ENCODE measurements at regions of chr12 and their contacts with region 1.

Region 1: DNA sequence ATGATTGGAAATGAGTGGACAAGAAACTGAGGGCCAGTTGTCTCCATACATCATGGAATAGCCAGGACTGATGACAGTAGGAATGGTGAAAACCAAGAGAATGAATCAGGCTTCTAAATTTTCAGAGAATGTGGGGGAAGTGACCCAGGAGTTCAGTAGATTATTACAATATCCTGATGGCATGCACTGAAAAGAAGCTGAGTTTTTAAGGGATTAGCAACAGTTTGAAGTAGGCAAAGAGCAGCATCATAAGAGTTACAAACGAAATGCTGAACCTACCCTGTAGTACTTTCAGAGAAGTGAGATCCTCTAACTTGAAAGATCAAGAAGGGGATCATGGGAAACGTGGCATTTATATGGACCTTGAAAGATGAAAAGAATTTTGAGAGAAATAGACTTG is 13.2 kb downstream of the SLC2A14 start:
- DNase-seq: peak in 1 of 2 experiments; percentile 7
- H3K4me3 ChIP-seq: no peak overlapping the region
- H3K4me3 Mint-ChIP-seq: no peak overlapping the region
- H3K27ac Mint-ChIP-seq: peak overlapping the region; percentile 92
- H3K4me1 ChIP-seq: peaks cover 56% of the 10 kb centered on the region
- H3K4me1 Mint-ChIP-seq: peaks cover 52% of the 10 kb centered on the region
- H3K27me3 ChIP-seq: no peaks in the 10 kb centered on the region
- H3K27me3 Mint-ChIP-seq: no peaks in the 10 kb centered on the region
- CTCF ChIP-seq: no peak

Region 2: GRCh38 chr12:7832059-7832696 is 27.4 kb before region 1 on chr12:
- CTCF ChIA-PET with region 1: interaction called, 10 read pairs
- POLR2A ChIA-PET with region 1: interaction called, 14 read pairs
- intact Hi-C with region 1: loop called (anchors 1 kb)
- DNase-seq: peak; percentile 80 to 85
- H3K4me3 ChIP-seq: no peak overlapping the region
- H3K4me3 Mint-ChIP-seq: peak overlapping the region; percentile 1
- H3K27ac Mint-ChIP-seq: peak overlapping the region; percentile 60
- H3K4me1 ChIP-seq: peaks cover 61% of the 10 kb centered on the region
- H3K4me1 Mint-ChIP-seq: peaks cover 51% of the 10 kb centered on the region
- H3K27me3 ChIP-seq: no peaks in the 10 kb centered on the region
- H3K27me3 Mint-ChIP-seq: no peaks in the 10 kb centered on the region
- CTCF ChIP-seq: peak; percentile 73 to 86

Region 3: DNA sequence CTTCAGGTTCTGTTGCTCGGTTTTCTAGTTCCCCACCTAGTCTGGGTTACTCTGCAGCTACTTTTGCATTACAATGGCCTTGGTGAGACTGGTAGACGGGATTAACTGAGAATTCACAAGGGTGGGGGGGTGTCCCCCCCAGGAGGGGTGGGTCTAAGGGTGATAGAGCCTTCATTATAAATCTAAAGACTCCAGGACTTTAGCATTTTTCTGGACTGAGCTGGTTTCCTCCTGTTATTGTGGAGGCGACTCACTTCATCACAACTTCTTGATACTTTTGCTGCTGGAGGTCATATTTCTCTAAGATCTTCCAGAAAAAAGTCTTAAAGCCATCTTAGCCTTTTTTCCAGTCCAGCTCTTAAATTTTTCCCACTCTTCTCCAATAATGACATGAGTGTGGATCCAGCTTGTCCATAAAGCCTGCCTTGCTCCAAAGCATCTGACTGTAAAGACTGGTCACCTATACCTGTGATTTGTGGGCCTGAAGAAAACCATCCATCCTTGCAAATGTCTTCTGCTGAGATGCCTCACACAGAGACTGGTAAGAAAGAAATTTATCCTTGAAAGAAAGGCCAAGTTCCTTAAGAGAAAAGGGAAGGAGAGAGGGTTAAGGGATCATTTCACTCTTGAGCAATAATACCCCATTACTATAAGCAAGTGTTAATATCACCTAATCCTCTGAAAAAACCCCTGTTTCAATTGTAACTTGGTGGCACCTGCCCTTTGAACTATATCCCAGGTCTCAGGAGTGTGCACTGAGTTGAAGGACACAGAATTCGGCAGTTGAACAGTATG is 32.8 kb after region 1 on chr12:
- CTCF ChIA-PET with region 1: interaction called, 5 read pairs
- POLR2A ChIA-PET with region 1: no interaction called
- intact Hi-C with region 1: loop called (anchors 2 kb)
- DNase-seq: no peak
- H3K4me3 ChIP-seq: no peak overlapping the region
- H3K4me3 Mint-ChIP-seq: peak overlapping the region; percentile 73
- H3K27ac Mint-ChIP-seq: peak overlapping the region; percentile 76
- H3K4me1 ChIP-seq: peaks cover 16% of the 10 kb centered on the region
- H3K4me1 Mint-ChIP-seq: peaks cover 25% of the 10 kb centered on the region
- H3K27me3 ChIP-seq: no peaks in the 10 kb centered on the region
- H3K27me3 Mint-ChIP-seq: no peaks in the 10 kb centered on the region
- CTCF ChIP-seq: no peak

Region 4: GRCh38 chr12:7907009-7907408 is 47.5 kb after region 1 on chr12:
- CTCF ChIA-PET with region 1: interaction called, 4 read pairs
- POLR2A ChIA-PET with region 1: no interaction called
- intact Hi-C with region 1: loop called (anchors 1 kb)
- DNase-seq: peak; percentile 96 to 98
- H3K4me3 ChIP-seq: no peak overlapping the region
- H3K4me3 Mint-ChIP-seq: peak overlapping the region; percentile 54
- H3K27ac Mint-ChIP-seq: peak overlapping the region; percentile 98
- H3K4me1 ChIP-seq: peaks cover 34% of the 10 kb centered on the region
- H3K4me1 Mint-ChIP-seq: peaks cover 38% of the 10 kb centered on the region
- H3K27me3 ChIP-seq: no peaks in the 10 kb centered on the region
- H3K27me3 Mint-ChIP-seq: no peaks in the 10 kb centered on the region
- CTCF ChIP-seq: peak; percentile 81 to 83

Region 5: GRCh38 chr12:7915559-7916403 is 56.2 kb after region 1 on chr12:
- CTCF ChIA-PET with region 1: interaction called, 3 read pairs
- POLR2A ChIA-PET with region 1: no interaction called
- intact Hi-C with region 1: loop called (anchors 1 kb)
- DNase-seq: peak; percentile 62 to 78
- H3K4me3 ChIP-seq: no peak overlapping the region
- H3K4me3 Mint-ChIP-seq: peak overlapping the region; percentile 43
- H3K27ac Mint-ChIP-seq: peak overlapping the region; percentile 73
- H3K4me1 ChIP-seq: peaks cover 15% of the 10 kb centered on the region
- H3K4me1 Mint-ChIP-seq: peaks cover 62% of the 10 kb centered on the region
- H3K27me3 ChIP-seq: no peaks in the 10 kb centered on the region
- H3K27me3 Mint-ChIP-seq: peaks cover 3% of the 10 kb centered on the region
- CTCF ChIP-seq: no peak

Region 6: DNA sequence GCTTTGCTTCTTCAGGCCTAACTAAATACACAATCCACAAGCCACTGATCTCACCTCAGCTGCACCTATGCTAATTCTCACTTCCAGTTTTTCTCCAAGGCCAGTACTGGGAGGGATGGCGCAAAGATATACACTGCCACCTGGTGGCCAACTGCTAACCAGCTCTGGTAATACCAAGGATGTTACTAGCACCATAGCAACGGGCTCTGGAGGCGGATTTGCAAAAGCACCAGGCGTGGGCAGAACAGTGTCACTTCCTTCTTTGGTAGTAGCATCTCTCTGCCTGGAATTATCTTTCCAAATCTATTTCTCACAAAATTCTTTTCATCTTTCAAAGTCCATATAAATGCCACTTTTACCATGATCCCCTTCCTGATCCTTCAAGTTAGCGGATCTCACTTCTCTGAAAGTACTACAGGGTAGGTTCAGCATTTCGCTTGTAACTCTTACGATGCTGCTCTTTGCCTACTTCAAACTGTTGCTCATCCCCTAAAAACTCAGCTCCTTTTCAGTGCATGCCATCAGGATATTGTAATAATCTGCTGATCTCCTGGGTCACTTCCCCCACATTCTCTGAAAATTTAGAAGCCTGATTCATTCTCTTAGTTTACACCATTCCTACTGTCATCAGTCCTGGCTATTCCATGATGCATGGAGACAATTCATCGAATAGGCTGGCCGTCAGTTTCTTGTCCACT is 135.9 kb after region 1 on chr12:
- CTCF ChIA-PET with region 1: no interaction called
- POLR2A ChIA-PET with region 1: interaction called, 3 read pairs
- intact Hi-C with region 1: loop called (anchors 1 kb)
- DNase-seq: peak; percentile 90 to 91
- H3K4me3 ChIP-seq: no peak overlapping the region
- H3K4me3 Mint-ChIP-seq: no peak overlapping the region
- H3K27ac Mint-ChIP-seq: no peak overlapping the region
- H3K4me1 ChIP-seq: peaks cover 46% of the 10 kb centered on the region
- H3K4me1 Mint-ChIP-seq: peaks cover 13% of the 10 kb centered on the region
- H3K27me3 ChIP-seq: no peaks in the 10 kb centered on the region
- H3K27me3 Mint-ChIP-seq: no peaks in the 10 kb centered on the region
- CTCF ChIP-seq: peak; percentile 73 to 94

Region 7: DNA sequence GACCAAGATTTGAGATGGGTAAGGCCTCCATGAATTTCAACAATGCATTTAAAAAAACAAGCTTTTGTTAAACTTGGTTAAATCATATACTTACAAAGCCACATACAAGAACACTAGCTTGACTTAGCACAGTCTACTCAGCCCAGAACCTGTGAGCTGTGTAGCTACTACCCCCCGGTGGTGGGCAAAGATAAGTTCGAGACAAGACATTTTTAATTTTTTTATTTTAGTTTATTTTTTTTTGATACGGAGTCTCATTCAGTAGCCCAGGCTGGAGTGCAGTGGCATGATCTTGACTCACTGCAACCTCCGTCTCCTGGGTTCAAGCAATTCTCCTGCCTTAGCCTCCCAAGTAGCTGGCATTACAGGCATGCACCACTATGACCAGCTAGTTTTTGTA is 218.8 kb after region 1 on chr12:
- CTCF ChIA-PET with region 1: interaction called, 6 read pairs
- POLR2A ChIA-PET with region 1: no interaction called
- intact Hi-C with region 1: loop called (anchors 1 kb)
- DNase-seq: peak; percentile 63 to 74
- H3K4me3 ChIP-seq: no peak overlapping the region
- H3K4me3 Mint-ChIP-seq: no peak overlapping the region
- H3K27ac Mint-ChIP-seq: no peak overlapping the region
- H3K4me1 ChIP-seq: 0 out of 2 replicates have a peak, but pooled peaks cover 4% of the 10 kb centered on the region
- H3K4me1 Mint-ChIP-seq: peaks cover 14% of the 10 kb centered on the region
- H3K27me3 ChIP-seq: no peaks in the 10 kb centered on the region
- H3K27me3 Mint-ChIP-seq: no peaks in the 10 kb centered on the region
- CTCF ChIP-seq: peak; percentile 60 to 64

Measured in Caco-2 (cell line).